ENCODE measurements at regions of chr17 and their contacts with region 1.

Region 1: DNA sequence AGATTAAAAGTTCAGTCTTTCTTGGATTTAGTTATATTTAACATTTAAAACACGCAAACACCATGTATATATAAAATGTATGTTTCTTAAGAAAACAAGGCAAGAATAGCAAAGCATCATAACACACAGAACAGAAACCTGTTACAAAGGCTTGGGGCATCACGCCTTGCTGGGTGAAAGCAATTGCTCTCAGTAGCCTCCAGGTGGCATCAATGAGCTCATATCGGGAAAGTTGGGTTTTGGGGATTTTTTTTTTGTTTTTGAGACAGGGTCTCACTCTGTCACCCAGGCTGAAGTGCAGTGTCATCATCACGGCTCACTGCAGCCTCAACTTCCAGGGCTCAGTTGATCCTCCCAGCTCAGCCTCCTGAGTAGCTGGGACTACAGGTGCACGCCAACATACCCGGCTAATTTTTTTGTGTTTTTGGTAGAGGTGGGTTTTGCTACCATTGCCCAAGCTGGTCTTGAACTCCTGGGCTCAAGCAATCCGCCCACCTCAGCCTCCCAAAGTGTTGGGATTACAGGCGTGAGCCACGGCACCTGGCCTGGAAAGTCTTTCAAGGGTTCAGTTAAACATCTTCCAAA is 56.9 kb downstream of the CYB5D2 start:
- DNase-seq: peak; percentile 46
- ATAC-seq: peak; percentile 74
- H3K4me3 Mint-ChIP-seq: no peak overlapping the region
- H3K27ac Mint-ChIP-seq: 0 out of 2 replicates have a peak overlapping the region, but pooled peaks have one; percentile 60
- H3K4me1 Mint-ChIP-seq: no peaks in the 10 kb centered on the region
- H3K27me3 Mint-ChIP-seq: no peaks in the 10 kb centered on the region
- CTCF ChIP-seq: peak; percentile 35; the same call in 1 of the 2 replicates

Region 2: DNA sequence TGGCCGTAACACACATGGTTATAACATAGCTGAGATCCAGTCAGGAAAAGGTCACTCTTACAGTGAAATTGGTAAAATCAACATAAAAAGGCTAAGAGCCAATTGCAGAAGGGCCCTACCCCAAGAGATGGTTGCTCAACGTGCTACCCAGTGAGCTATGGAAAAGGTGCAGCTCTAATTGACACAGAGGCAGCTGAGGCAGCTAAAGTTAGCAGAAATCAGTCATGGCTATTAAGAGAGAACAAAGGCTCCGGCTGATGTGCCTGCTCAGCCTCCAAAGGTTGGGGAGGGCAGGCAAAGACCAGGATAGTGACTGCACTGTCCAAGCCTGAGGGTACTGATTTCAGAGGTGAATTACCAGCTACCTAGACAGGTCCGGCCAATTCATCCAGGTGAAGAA is 159.1 kb before region 1 on chr17:
- CTCF ChIA-PET with region 1: no interaction called
- POLR2A ChIA-PET with region 1: no interaction called
- DNase-seq: no peak
- ATAC-seq: no peak
- H3K4me3 Mint-ChIP-seq: no peak overlapping the region
- H3K27ac Mint-ChIP-seq: no peak overlapping the region
- H3K4me1 Mint-ChIP-seq: no peaks in the 10 kb centered on the region
- H3K27me3 Mint-ChIP-seq: no peaks in the 10 kb centered on the region
- CTCF ChIP-seq: no peak

Region 3: GRCh38 chr17:4087906-4088693 is 111.8 kb before region 1 on chr17:
- CTCF ChIA-PET with region 1: no interaction called
- POLR2A ChIA-PET with region 1: no interaction called
- DNase-seq: no peak
- ATAC-seq: no peak
- H3K4me3 Mint-ChIP-seq: no peak overlapping the region
- H3K27ac Mint-ChIP-seq: no peak overlapping the region
- H3K4me1 Mint-ChIP-seq: no peaks in the 10 kb centered on the region
- H3K27me3 Mint-ChIP-seq: no peaks in the 10 kb centered on the region
- CTCF ChIP-seq: no peak

Region 4: DNA sequence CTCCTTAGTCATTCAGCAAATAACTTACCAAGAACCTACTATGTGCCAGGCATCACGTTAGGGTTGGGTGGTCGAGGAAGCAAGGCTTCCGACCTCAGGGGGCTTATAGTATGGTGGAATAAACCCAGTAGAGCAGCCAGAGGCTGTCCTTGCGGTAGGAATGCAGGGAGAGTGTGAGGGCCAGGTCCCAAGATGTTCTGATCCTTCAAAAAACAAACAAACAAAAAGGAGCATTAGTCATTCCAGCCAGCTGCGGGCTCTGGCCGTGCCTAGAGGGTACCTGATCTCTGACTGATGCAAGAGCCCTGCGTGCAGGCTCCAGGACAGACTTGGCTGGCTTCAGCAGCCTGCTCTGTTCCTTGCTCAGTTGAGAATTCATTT is 38.7 kb before region 1 on chr17:
- CTCF ChIA-PET with region 1: interaction called, 13 read pairs
- POLR2A ChIA-PET with region 1: interaction called, 3 read pairs
- DNase-seq: peak; percentile 21
- ATAC-seq: peak; percentile 22; the same call in 1 of the 2 replicates
- H3K4me3 Mint-ChIP-seq: no peak overlapping the region
- H3K27ac Mint-ChIP-seq: peak overlapping the region; percentile 73
- H3K4me1 Mint-ChIP-seq: peaks cover 16% of the 10 kb centered on the region
- H3K27me3 Mint-ChIP-seq: no peaks in the 10 kb centered on the region
- CTCF ChIP-seq: no peak

Region 5: GRCh38 chr17:4215882-4216570 is 16.1 kb after region 1 on chr17:
- CTCF ChIA-PET with region 1: interaction called, 39 read pairs
- POLR2A ChIA-PET with region 1: no interaction called
- DNase-seq: no peak
- ATAC-seq: no peak
- H3K4me3 Mint-ChIP-seq: no peak overlapping the region
- H3K27ac Mint-ChIP-seq: peak overlapping the region; percentile 93
- H3K4me1 Mint-ChIP-seq: peaks cover 24% of the 10 kb centered on the region
- H3K27me3 Mint-ChIP-seq: no peaks in the 10 kb centered on the region
- CTCF ChIP-seq: no peak; the same call in 1 of the 2 replicates

Region 6: GRCh38 chr17:4249452-4250029 is 49.6 kb after region 1 on chr17:
- CTCF ChIA-PET with region 1: interaction called, 24 read pairs
- POLR2A ChIA-PET with region 1: no interaction called
- DNase-seq: no peak
- ATAC-seq: peak; percentile 27; the same call in 1 of the 2 replicates
- H3K4me3 Mint-ChIP-seq: no peak overlapping the region
- H3K27ac Mint-ChIP-seq: peak overlapping the region; percentile 55
- H3K4me1 Mint-ChIP-seq: peaks cover 34% of the 10 kb centered on the region
- H3K27me3 Mint-ChIP-seq: no peaks in the 10 kb centered on the region
- CTCF ChIP-seq: 0 out of 2 replicates have a peak, but pooled peaks have one; percentile 18

Region 7: DNA sequence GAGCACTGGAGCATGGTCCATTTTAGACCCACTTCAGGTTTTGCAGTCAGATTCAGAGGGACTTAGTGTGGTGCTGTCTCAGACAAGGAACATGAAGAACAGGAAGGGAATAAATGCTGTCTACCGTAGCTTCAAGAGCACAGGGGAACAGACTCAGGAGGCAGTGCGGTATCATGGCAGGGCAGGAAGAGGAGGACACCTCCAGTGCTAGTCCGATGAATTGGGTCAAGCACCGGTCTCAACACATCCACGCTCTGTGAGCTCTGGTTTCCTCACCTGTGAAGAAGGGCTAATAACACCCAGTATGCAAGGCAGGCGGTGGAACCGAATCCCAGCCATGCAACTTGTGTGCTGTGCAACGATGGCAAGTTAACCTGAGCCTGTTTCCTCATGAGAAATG is 67.5 kb after region 1 on chr17:
- CTCF ChIA-PET with region 1: no interaction called
- POLR2A ChIA-PET with region 1: no interaction called
- DNase-seq: no peak
- ATAC-seq: no peak
- H3K4me3 Mint-ChIP-seq: no peak overlapping the region
- H3K27ac Mint-ChIP-seq: peak overlapping the region; percentile 13
- H3K4me1 Mint-ChIP-seq: peaks cover 24% of the 10 kb centered on the region
- H3K27me3 Mint-ChIP-seq: no peaks in the 10 kb centered on the region
- CTCF ChIP-seq: no peak

Region 8: DNA sequence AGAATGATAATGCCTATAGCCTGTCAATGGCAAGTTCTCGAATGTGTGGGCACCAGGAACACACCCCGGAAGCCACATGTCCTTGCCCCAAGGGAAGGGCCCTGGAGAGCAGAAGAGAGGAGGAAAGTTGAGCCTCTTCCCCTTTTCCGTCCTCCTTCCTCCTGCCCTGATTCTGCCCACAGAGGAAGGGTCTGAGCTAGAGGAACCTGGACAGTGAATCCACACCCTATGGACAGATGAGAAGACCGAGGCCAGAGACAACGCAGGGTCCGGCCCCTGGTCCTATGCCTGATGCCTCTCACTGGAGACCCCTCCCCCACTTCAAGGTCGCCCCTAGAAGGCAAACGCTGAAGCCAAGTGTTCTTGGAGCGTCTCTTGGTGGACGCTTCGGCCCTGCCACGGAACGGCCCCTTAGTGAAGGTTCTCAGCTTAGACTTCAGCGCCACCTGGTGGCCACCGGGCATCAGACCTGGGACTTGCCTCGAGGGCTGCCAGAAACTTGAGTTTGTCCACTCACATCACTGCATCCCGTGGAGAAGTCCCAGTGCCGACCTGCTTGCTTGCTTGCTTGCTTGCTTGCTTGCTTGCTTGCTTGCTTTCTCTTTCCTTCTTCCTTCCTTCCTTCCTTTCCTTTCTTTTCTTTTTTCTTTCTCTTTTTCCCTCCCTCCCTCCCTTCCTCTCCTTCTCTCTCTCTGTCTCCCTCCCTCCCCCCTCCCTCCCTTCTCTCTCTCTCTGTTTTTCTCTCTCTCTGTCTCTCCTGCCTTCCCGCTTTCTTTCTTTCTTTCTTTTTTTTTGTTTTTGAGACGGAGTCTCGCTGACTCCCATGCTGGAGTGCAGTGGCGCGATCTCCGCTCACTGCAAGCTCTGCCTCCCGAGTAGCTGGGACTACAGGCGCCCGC is 213.3 kb after region 1 on chr17:
- CTCF ChIA-PET with region 1: interaction called, 22 read pairs
- POLR2A ChIA-PET with region 1: no interaction called
- DNase-seq: peak; percentile 98
- ATAC-seq: peak; percentile 96
- H3K4me3 Mint-ChIP-seq: peak overlapping the region; percentile 35
- H3K27ac Mint-ChIP-seq: 0 out of 2 replicates have a peak overlapping the region, but pooled peaks have one; percentile 40
- H3K4me1 Mint-ChIP-seq: peaks cover 7% of the 10 kb centered on the region
- H3K27me3 Mint-ChIP-seq: no peaks in the 10 kb centered on the region
- CTCF ChIP-seq: peak; percentile 94

Measured in WTC11 (cell line).